HCT116 (cell line): ENCODE measurements at regions of chr5 and their contacts with region 1.

Region 1: GRCh38 chr5:98905857-98906690 is 22.7 kb downstream of the CHD1 start:
- DNase-seq: no peak
- ATAC-seq: peak; percentile 55; the same call in 1 of the 2 replicates
- H3K4me3 ChIP-seq: no peak overlapping the region
- H3K27ac ChIP-seq: no peak overlapping the region
- H3K4me1 ChIP-seq: no peaks in the 10 kb centered on the region
- H3K27me3 ChIP-seq: no peaks in the 10 kb centered on the region
- CTCF ChIP-seq: peak; percentile 43 to 77 (median 54); a peak in 4 of 6 replicates
- POLR2A ChIP-seq: no peak
- RAD21 ChIP-seq: peak; percentile 67

Region 2: DNA sequence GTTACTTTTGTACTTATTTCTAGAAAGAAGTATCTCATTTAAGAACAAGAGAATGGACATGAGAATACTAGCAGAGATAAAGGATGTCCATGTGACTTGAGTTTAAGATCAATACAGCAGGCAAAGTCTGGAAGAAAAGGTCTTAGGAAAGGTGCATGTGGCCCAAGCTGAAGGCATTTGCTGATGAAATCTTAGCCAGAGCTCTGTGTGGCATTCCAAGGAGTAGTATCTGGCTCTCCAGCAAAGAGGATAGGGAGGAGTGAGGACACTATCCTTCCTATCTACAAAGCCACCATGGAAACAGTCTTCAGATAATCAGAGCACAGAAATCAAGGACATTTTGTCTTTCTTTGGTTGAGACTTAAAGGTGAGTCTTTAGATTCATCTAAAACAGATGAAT is 376.8 kb before region 1 on chr5:
- CTCF ChIA-PET with region 1: no interaction called
- POLR2A ChIA-PET with region 1: no interaction called
- RAD21 ChIA-PET with region 1: no interaction called
- intact Hi-C with region 1: no loop called
- DNase-seq: no peak
- ATAC-seq: no peak
- H3K4me3 ChIP-seq: no peak overlapping the region
- H3K27ac ChIP-seq: no peak overlapping the region
- H3K4me1 ChIP-seq: no peaks in the 10 kb centered on the region
- H3K27me3 ChIP-seq: no peaks in the 10 kb centered on the region
- CTCF ChIP-seq: no peak
- POLR2A ChIP-seq: no peak
- RAD21 ChIP-seq: no peak

Region 3: DNA sequence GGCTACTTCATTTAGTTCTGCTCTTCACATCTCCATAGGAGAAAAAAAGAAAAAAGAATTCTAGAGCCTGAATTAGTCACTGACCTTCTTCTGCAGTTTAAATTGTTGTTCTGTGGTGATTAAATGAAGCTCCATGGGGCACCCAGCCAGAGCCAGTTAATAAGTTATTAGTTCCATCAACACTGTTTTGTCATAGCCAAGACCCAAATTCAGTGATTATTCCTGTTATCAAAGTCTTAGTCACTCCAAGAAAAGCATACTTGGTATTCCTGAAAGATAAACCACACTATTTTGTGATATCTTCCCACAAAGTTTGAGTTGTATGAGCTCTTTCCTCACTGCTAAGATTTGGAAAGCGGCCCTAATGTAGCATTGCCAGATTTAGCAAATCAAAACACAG is 267.4 kb before region 1 on chr5:
- CTCF ChIA-PET with region 1: no interaction called
- POLR2A ChIA-PET with region 1: no interaction called
- RAD21 ChIA-PET with region 1: no interaction called
- intact Hi-C with region 1: no loop called
- DNase-seq: no peak
- ATAC-seq: no peak
- H3K4me3 ChIP-seq: no peak overlapping the region
- H3K27ac ChIP-seq: no peak overlapping the region
- H3K4me1 ChIP-seq: no peaks in the 10 kb centered on the region
- H3K27me3 ChIP-seq: no peaks in the 10 kb centered on the region
- CTCF ChIP-seq: no peak
- POLR2A ChIP-seq: no peak
- RAD21 ChIP-seq: no peak

Region 4: GRCh38 chr5:99032234-99033013 is 126.3 kb after region 1 on chr5:
- CTCF ChIA-PET with region 1: interaction called, 6 read pairs
- POLR2A ChIA-PET with region 1: no interaction called
- RAD21 ChIA-PET with region 1: no interaction called
- intact Hi-C with region 1: loop called (anchors 1 kb)
- DNase-seq: peak; percentile 56
- ATAC-seq: peak; percentile 89
- H3K4me3 ChIP-seq: peak overlapping the region in 1 of 2 experiments; percentile 3; a peak in 1 of 4 replicates
- H3K27ac ChIP-seq: no peak overlapping the region
- H3K4me1 ChIP-seq: peaks cover 0 to 11% of the 10 kb centered on the region in 2 experiments; a peak in 1 of 4 replicates
- H3K27me3 ChIP-seq: no peaks in the 10 kb centered on the region
- CTCF ChIP-seq: peak; percentile 67 to 84 (median 71)
- POLR2A ChIP-seq: no peak
- RAD21 ChIP-seq: peak; percentile 90

Region 5: GRCh38 chr5:99060306-99061261 is 154.5 kb after region 1 on chr5:
- CTCF ChIA-PET with region 1: interaction called, 10 read pairs
- POLR2A ChIA-PET with region 1: no interaction called
- RAD21 ChIA-PET with region 1: no interaction called
- intact Hi-C with region 1: loop called (anchors 1 kb)
- DNase-seq: peak; percentile 62
- ATAC-seq: peak; percentile 82
- H3K4me3 ChIP-seq: no peak overlapping the region
- H3K27ac ChIP-seq: no peak overlapping the region
- H3K4me1 ChIP-seq: peaks cover 0 to 5% of the 10 kb centered on the region in 2 experiments; a peak in 1 of 4 replicates
- H3K27me3 ChIP-seq: no peaks in the 10 kb centered on the region
- CTCF ChIP-seq: peak; percentile 61 to 95 (median 80); a peak in 5 of 6 replicates
- POLR2A ChIP-seq: no peak
- RAD21 ChIP-seq: peak; percentile 87

Region 6: DNA sequence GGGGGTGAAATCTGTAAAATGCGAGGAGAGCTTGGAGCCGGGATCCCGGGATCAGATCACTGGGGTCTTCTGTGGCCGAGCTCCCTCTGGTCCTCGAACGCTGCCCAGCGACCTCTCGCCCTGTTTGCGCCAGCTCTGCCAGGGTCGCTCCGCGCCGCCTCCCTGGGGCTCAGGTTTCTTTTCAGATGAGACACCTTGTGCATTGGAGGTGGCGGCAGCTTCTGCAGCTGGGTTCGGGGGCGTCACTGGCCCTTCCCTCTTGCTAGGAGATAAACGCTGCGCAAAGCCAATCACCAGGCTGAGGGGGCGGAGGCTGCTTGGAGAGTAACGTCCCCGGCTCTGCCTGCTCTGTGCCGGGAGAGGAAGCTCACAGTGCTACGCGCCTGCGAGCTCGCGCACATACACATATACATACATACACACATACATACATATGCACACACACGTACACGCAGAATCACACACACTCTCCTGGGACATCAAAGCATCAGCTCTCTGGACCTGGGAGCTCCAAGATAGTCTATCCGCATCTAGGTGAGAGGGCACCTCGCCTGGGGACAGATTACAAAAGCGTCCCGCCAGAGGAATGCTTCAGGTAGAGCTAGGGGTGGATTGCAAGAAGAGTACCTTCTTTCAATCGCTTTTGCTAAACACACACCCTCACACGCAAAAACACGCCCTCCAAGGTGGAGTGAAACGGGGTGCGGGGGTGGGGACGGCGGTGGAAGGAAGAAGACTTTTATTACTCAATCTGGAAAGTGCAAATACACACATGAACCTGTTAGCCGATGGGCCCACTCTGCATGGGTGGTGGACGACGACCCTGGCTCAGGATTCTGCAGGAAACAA is 1997.2 kb after region 1 on chr5 and contains the start of gene ST8SIA4:
- CTCF ChIA-PET with region 1: no interaction called
- POLR2A ChIA-PET with region 1: no interaction called
- RAD21 ChIA-PET with region 1: no interaction called
- intact Hi-C with region 1: no loop called
- DNase-seq: no peak
- ATAC-seq: no peak
- H3K4me3 ChIP-seq: no peak within 1 kb of the TSS
- H3K27ac ChIP-seq: no peak within 1 kb of the TSS
- H3K4me1 ChIP-seq: no peaks in the 10 kb centered on the region
- H3K27me3 ChIP-seq: no peaks in the 10 kb centered on the region
- CTCF ChIP-seq: no peak
- POLR2A ChIP-seq: no peak
- RAD21 ChIP-seq: no peak
- total RNA-seq, gene ST8SIA4: not detected